K562 (cell line): ENCODE measurements at regions of chr2 and their contacts with region 1.

Region 1: GRCh38 chr2:26770986-26771602 is 7.0 kb downstream of the SLC35F6 start:
- DNase-seq: peak in 3 of 4 experiments; percentile 70 to 77 (median 72)
- ATAC-seq: peak; percentile 61
- H3K4me3 ChIP-seq: no peak overlapping the region
- H3K27ac ChIP-seq: peak overlapping the region; percentile 58
- H3K4me1 ChIP-seq: peaks cover 60 to 62% of the 10 kb centered on the region in 2 experiments
- H3K27me3 ChIP-seq: no peaks in the 10 kb centered on the region
- CTCF ChIP-seq: peak; percentile 75 to 96 (median 82)
- EP300 ChIP-seq: no peak; the same call in 1 of the 2 replicates
- POLR2A ChIP-seq: no peak
- RAD21 ChIP-seq: peak; percentile 17 to 26; a peak in 2 of 4 replicates

Region 2: GRCh38 chr2:26785431-26786206 is 14.5 kb after region 1 on chr2 and contains the start of gene CENPA:
- CTCF ChIA-PET with region 1: no interaction called
- POLR2A ChIA-PET with region 1: interaction called, 21 read pairs
- in situ Hi-C with region 1: no loop called
- intact Hi-C with region 1: no loop called
- DNase-seq: peak; percentile 99 to 100 (median 100)
- ATAC-seq: peak; percentile 98
- H3K4me3 ChIP-seq: peak within 1 kb of the TSS; percentile 66
- H3K27ac ChIP-seq: peak within 1 kb of the TSS; percentile 84
- H3K4me1 ChIP-seq: peaks cover 12 to 21% of the 10 kb centered on the region in 2 experiments; a peak in 4 of 5 replicates
- H3K27me3 ChIP-seq: no peaks in the 10 kb centered on the region
- CTCF ChIP-seq: peak in 2 of 3 experiments; percentile 5 to 21; a peak in 2 of 6 replicates
- EP300 ChIP-seq: peak; percentile 15; the same call in 1 of the 2 replicates
- POLR2A ChIP-seq: peak; percentile 88
- RAD21 ChIP-seq: no peak; a peak in 1 of 4 replicates
- polyA plus RNA-seq, gene CENPA: 11.3 to 13.4 TPM

Region 3: DNA sequence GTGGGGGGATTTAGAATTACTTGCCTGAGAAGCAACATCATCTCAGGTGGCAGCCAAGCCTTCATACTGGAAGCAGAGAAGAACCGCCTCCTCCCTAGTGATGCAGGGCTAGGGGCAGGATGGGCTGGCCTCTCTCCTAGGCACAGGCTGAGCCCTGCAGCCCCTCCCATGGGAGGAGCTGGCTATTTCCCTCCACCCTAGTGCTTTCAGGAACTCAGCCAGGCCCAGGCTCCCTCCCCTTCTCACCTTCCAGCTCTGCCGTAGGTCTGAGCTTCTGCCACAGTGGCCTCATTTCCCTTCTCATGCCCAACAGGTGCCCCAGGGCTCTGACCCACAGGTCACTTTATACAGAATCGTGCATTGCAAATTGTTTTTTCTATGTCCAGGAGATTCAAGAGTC is 45.8 kb after region 1 on chr2:
- CTCF ChIA-PET with region 1: no interaction called
- POLR2A ChIA-PET with region 1: no interaction called
- in situ Hi-C with region 1: no loop called
- intact Hi-C with region 1: no loop called
- DNase-seq: peak; percentile 23 to 49 (median 38)
- ATAC-seq: peak; percentile 88
- H3K4me3 ChIP-seq: no peak overlapping the region
- H3K27ac ChIP-seq: no peak overlapping the region
- H3K4me1 ChIP-seq: peaks cover 4 to 5% of the 10 kb centered on the region in 2 experiments; a peak in 3 of 5 replicates
- H3K27me3 ChIP-seq: peaks cover 29 to 61% of the 10 kb centered on the region in 2 experiments
- CTCF ChIP-seq: no peak
- EP300 ChIP-seq: no peak
- POLR2A ChIP-seq: no peak
- RAD21 ChIP-seq: no peak

Region 4: GRCh38 chr2:27050281-27050995 is 279.3 kb after region 1 on chr2:
- CTCF ChIA-PET with region 1: no interaction called
- POLR2A ChIA-PET with region 1: no interaction called
- in situ Hi-C with region 1: no loop called
- intact Hi-C with region 1: no loop called
- DNase-seq: peak; percentile 64 to 86 (median 70)
- ATAC-seq: peak; percentile 77
- H3K4me3 ChIP-seq: peak overlapping the region; percentile 84
- H3K27ac ChIP-seq: peak overlapping the region; percentile 95
- H3K4me1 ChIP-seq: peaks cover 12 to 22% of the 10 kb centered on the region in 2 experiments; a peak in 3 of 5 replicates
- H3K27me3 ChIP-seq: no peaks in the 10 kb centered on the region
- CTCF ChIP-seq: no peak
- EP300 ChIP-seq: peak; percentile 62
- POLR2A ChIP-seq: peak; percentile 72
- RAD21 ChIP-seq: peak in 1 of 2 experiments; percentile 3; a peak in 1 of 4 replicates